ENCODE measurements at regions of chr13 and their contacts with region 1.

Region 1: GRCh38 chr13:20773194-20774080 is at the start of gene EEF1AKMT1:
- DNase-seq: peak; percentile 89 to 93 (median 93)
- H3K4me3 ChIP-seq: peak within 1 kb of the TSS; percentile 70 to 86
- H3K4me3 Mint-ChIP-seq: peak within 1 kb of the TSS; percentile 90 to 99 (median 94)
- H3K27ac ChIP-seq: peak within 1 kb of the TSS; percentile 85
- H3K27ac Mint-ChIP-seq: peak within 1 kb of the TSS; percentile 95 to 100 (median 99)
- H3K4me1 ChIP-seq: peaks cover 13% of the 10 kb centered on the region
- H3K4me1 Mint-ChIP-seq: peaks cover 17 to 35% (median 26%) of the 10 kb centered on the region in 4 donors
- H3K27me3 ChIP-seq: no peaks in the 10 kb centered on the region
- H3K27me3 Mint-ChIP-seq: no peaks in the 10 kb centered on the region
- total RNA-seq, gene EEF1AKMT1: 8.1 TPM

Region 2: DNA sequence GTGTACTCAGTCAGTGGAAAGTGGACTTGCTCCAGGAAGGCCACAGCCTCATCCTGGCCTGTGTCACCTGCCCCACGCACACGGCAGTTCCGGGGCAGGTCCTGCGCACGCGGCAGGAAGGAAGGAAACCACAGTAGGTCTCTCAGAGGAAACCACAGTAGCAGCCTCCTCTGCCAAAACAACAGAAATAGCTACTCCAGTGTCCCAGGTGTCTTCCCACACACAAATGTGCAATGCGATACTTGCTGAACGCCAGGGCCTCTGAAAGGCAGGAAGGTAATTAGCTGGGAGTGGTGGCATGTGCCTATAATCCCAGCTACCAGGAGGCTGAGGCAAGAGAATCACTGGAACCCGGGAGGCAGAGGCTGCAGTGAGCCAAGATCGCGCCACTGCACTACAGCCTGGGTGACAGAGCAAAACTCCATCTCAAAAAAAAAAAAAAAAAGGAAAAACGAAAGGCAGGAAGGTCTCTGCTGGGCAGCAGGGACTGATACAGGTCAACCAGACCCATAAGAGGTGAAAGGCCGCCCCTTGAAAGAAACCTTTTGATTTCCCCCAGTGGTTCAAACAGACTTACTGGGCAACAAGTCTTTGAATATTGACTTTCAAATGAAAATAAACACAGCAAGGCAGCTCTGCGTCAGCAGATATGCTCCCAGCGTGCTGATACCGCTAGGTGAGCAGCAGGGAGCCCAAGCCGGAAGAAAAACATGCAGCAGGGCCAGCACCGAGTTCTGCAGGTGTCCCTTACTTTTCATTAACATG is 297.3 kb before region 1 on chr13:
- CTCF ChIA-PET with region 1: no interaction called
- POLR2A ChIA-PET with region 1: interaction called, 8 read pairs
- intact Hi-C with region 1: loop called (anchors 2 kb)
- DNase-seq: peak; percentile 78 to 87 (median 85)
- H3K4me3 ChIP-seq: peak overlapping the region; percentile 26 to 39
- H3K4me3 Mint-ChIP-seq: peak overlapping the region; percentile 83 to 92 (median 87)
- H3K27ac ChIP-seq: peak overlapping the region; percentile 54
- H3K27ac Mint-ChIP-seq: peak overlapping the region; percentile 93 to 98 (median 96)
- H3K4me1 ChIP-seq: peaks cover 29% of the 10 kb centered on the region
- H3K4me1 Mint-ChIP-seq: peaks cover 23 to 44% (median 34%) of the 10 kb centered on the region in 4 donors
- H3K27me3 ChIP-seq: no peaks in the 10 kb centered on the region
- H3K27me3 Mint-ChIP-seq: no peaks in the 10 kb centered on the region

Region 3: DNA sequence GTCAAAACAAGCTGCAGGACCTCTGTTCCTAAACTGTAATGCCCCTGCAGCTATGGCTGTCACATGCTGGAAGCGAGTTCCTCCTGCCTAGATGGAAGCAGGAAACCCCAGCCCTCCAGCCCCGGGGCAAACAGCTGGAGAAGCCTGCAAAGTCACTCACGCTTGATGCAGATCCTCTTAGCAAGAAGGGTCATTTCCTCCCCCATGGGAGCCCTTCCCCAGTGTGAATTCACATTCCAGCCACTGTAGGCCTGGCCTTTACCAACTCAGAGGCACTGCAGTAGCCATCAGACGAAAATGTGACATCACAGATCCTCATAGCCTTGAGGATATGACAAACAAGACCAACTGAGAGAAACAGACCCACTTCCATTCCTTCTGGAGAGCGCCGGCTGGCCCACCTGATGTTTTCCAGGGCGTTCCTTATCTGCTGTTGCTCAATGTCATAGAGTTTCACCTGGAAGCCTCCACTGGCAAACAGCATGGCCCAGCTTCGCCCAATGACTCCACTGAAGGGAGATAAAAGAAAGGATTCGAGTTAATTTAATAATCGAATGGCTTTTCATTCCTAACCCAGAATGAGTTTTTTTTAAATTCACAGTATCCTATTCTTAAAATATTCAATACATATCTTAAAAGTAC is 261.3 kb before region 1 on chr13:
- CTCF ChIA-PET with region 1: no interaction called
- POLR2A ChIA-PET with region 1: no interaction called
- intact Hi-C with region 1: no loop called
- DNase-seq: no peak
- H3K4me3 ChIP-seq: no peak overlapping the region
- H3K4me3 Mint-ChIP-seq: no peak overlapping the region
- H3K27ac ChIP-seq: no peak overlapping the region
- H3K27ac Mint-ChIP-seq: no peak overlapping the region
- H3K4me1 ChIP-seq: no peaks in the 10 kb centered on the region
- H3K4me1 Mint-ChIP-seq: peaks cover 0 to 2% (median 0%) of the 10 kb centered on the region in 4 donors
- H3K27me3 ChIP-seq: no peaks in the 10 kb centered on the region
- H3K27me3 Mint-ChIP-seq: no peaks in the 10 kb centered on the region

Region 4: GRCh38 chr13:20525690-20526544 is 247.5 kb before region 1 on chr13 and contains the start of gene CRYL1:
- CTCF ChIA-PET with region 1: no interaction called
- POLR2A ChIA-PET with region 1: interaction called, 9 read pairs
- intact Hi-C with region 1: loop called (anchors 2 kb)
- DNase-seq: peak; percentile 62 to 74 (median 71)
- H3K4me3 ChIP-seq: peak within 1 kb of the TSS; percentile 49 to 83
- H3K4me3 Mint-ChIP-seq: peak within 1 kb of the TSS; percentile 88 to 97 (median 92)
- H3K27ac ChIP-seq: peak within 1 kb of the TSS; percentile 73
- H3K27ac Mint-ChIP-seq: peak within 1 kb of the TSS; percentile 65 to 97 (median 89)
- H3K4me1 ChIP-seq: peaks cover 14% of the 10 kb centered on the region
- H3K4me1 Mint-ChIP-seq: peaks cover 12 to 29% (median 22%) of the 10 kb centered on the region in 4 donors
- H3K27me3 ChIP-seq: no peaks in the 10 kb centered on the region
- H3K27me3 Mint-ChIP-seq: peaks cover 0 to 5% of the 10 kb centered on the region in 2 donors
- total RNA-seq, gene CRYL1: 18.1 to 22.1 TPM

Region 5: GRCh38 chr13:20703780-20704445 is 69.5 kb before region 1 on chr13:
- CTCF ChIA-PET with region 1: no interaction called
- POLR2A ChIA-PET with region 1: interaction called, 4 read pairs
- intact Hi-C with region 1: loop called (anchors 1 kb)
- DNase-seq: peak; percentile 78 to 83 (median 81)
- H3K4me3 ChIP-seq: no peak overlapping the region
- H3K4me3 Mint-ChIP-seq: no peak overlapping the region
- H3K27ac ChIP-seq: no peak overlapping the region
- H3K27ac Mint-ChIP-seq: no peak overlapping the region
- H3K4me1 ChIP-seq: peaks cover 7% of the 10 kb centered on the region
- H3K4me1 Mint-ChIP-seq: peaks cover 3 to 14% (median 8%) of the 10 kb centered on the region in 4 donors
- H3K27me3 ChIP-seq: peaks cover 30% of the 10 kb centered on the region
- H3K27me3 Mint-ChIP-seq: peaks cover 11 to 22% of the 10 kb centered on the region in 2 donors

Region 6: DNA sequence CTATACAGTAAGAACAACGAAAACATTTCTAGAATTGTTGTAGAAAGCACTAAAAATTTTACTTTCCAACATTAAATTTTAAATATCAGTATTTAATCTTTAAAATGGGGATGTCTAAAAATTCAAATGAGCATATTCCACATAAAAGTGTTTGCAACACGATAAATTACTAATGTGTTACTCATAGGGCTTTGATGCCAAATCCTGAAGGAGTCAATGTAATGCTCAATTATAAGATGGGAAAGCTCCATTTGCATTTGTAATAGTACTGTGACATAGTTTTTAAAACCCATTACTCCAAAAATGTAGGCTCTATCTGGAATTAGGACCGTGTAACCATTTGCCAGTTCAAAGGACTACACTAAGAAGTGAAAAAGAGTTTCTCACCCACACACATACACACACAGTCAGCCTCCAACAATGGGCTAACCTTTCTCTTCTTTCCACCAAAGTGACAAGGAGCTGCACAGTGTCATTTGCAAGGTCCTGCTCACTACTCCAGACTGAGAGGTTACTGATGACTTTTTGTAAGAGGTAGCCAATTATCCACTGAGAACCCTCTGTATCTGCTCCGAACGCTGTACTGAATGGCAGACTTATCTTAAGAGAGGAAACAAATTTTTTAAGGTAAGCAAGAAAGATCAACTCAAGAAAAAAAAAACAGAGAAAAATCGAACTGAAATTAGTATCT is 26.4 kb after region 1 on chr13:
- CTCF ChIA-PET with region 1: no interaction called
- POLR2A ChIA-PET with region 1: no interaction called
- intact Hi-C with region 1: no loop called
- DNase-seq: no peak
- H3K4me3 ChIP-seq: no peak overlapping the region
- H3K4me3 Mint-ChIP-seq: no peak overlapping the region
- H3K27ac ChIP-seq: no peak overlapping the region
- H3K27ac Mint-ChIP-seq: peak overlapping the region in 2 of 7 donors; percentile 18 to 36
- H3K4me1 ChIP-seq: peaks cover 10% of the 10 kb centered on the region
- H3K4me1 Mint-ChIP-seq: peaks cover 10 to 17% (median 14%) of the 10 kb centered on the region in 4 donors
- H3K27me3 ChIP-seq: no peaks in the 10 kb centered on the region
- H3K27me3 Mint-ChIP-seq: no peaks in the 10 kb centered on the region

Region 7: GRCh38 chr13:20902438-20903163 is 129.2 kb after region 1 on chr13 and contains the start of gene XPO4:
- CTCF ChIA-PET with region 1: interaction called, 5 read pairs
- POLR2A ChIA-PET with region 1: interaction called, 11 read pairs
- intact Hi-C with region 1: loop called (anchors 1 kb)
- DNase-seq: peak; percentile 77 to 81 (median 79)
- H3K4me3 ChIP-seq: peak within 1 kb of the TSS; percentile 97 to 98
- H3K4me3 Mint-ChIP-seq: peak within 1 kb of the TSS; percentile 93 to 98 (median 96)
- H3K27ac ChIP-seq: peak within 1 kb of the TSS; percentile 89
- H3K27ac Mint-ChIP-seq: peak within 1 kb of the TSS; percentile 89 to 98 (median 95)
- H3K4me1 ChIP-seq: peaks cover 34% of the 10 kb centered on the region
- H3K4me1 Mint-ChIP-seq: peaks cover 23 to 38% (median 29%) of the 10 kb centered on the region in 4 donors
- H3K27me3 ChIP-seq: no peaks in the 10 kb centered on the region
- H3K27me3 Mint-ChIP-seq: peaks cover 0 to 2% of the 10 kb centered on the region in 2 donors
- total RNA-seq, gene XPO4: 25.5 to 27.4 TPM

Region 8: DNA sequence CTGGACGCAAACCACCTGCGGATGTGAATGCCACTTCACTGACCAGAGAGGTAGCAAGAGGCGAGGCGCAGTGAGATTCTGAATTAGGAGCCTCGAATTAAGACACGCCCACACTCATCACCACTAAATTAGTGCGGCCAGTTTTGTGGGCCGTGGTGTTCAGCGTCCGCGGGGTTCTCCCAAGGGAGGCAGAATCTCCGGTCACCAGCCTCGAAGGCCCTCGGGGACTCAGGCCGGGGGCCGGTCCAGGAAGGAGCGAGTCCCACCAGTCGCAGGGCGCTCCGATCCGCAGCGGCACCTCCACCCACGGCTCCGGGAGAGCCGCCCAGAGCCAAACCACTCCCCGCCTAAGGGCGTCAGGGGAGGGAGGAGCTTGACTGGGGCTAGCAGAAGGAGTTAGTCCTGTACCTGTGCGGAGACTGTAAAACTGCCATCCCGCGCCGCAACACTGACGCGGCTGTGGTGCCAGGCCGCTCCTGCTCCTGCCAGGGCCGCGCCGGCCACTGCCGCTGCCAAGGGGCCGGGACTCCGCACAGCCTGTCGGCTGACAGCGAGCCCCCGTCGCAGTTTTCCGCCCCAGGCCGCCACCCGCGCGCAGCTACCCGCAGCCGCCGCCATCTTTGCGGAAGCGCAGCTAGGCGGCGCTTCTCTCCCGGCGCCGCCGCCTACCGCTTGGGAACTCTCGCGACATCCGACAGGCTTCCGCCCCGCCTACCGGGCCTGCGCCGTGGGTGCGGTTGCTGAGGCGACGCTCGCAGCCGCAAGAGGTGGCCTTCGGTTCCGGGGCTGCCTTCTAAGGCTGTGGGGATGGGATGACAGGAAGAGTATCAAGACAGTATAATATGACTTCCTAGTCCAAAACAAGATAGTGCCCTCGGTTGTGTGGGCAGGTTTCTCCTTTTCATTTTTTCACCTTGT is 830.4 kb after region 1 on chr13 and contains the start of gene MICU2:
- CTCF ChIA-PET with region 1: no interaction called
- POLR2A ChIA-PET with region 1: interaction called, 6 read pairs
- intact Hi-C with region 1: loop called (anchors 2 kb)
- DNase-seq: peak; percentile 96 to 97 (median 97)
- H3K4me3 ChIP-seq: peak within 1 kb of the TSS; percentile 78 to 83
- H3K4me3 Mint-ChIP-seq: peak within 1 kb of the TSS; percentile 86 to 97 (median 89)
- H3K27ac ChIP-seq: peak within 1 kb of the TSS; percentile 85
- H3K27ac Mint-ChIP-seq: peak within 1 kb of the TSS; percentile 90 to 97 (median 95)
- H3K4me1 ChIP-seq: peaks cover 36% of the 10 kb centered on the region
- H3K4me1 Mint-ChIP-seq: peaks cover 28 to 58% (median 36%) of the 10 kb centered on the region in 4 donors
- H3K27me3 ChIP-seq: no peaks in the 10 kb centered on the region
- H3K27me3 Mint-ChIP-seq: peaks cover 4% of the 10 kb centered on the region in 2 donors
- total RNA-seq, gene MICU2: 46.0 to 50.3 TPM